Endothelial cell of umbilical vein (primary cell): ENCODE measurements at regions of chr3 and their contacts with region 1.

Region 1: GRCh38 chr3:161423911-161424522 is 52.7 kb upstream of the SPTSSB start:
- DNase-seq: peak; percentile 44
- H3K4me3 ChIP-seq: no peak overlapping the region
- H3K27ac ChIP-seq: no peak overlapping the region
- H3K4me1 ChIP-seq: peaks cover 5% of the 10 kb centered on the region
- H3K27me3 ChIP-seq: peaks cover 1 to 5% of the 10 kb centered on the region in 2 experiments
- CTCF ChIP-seq: peak in 1 of 2 donors; percentile 40
- POLR2A ChIP-seq: no peak

Region 2: DNA sequence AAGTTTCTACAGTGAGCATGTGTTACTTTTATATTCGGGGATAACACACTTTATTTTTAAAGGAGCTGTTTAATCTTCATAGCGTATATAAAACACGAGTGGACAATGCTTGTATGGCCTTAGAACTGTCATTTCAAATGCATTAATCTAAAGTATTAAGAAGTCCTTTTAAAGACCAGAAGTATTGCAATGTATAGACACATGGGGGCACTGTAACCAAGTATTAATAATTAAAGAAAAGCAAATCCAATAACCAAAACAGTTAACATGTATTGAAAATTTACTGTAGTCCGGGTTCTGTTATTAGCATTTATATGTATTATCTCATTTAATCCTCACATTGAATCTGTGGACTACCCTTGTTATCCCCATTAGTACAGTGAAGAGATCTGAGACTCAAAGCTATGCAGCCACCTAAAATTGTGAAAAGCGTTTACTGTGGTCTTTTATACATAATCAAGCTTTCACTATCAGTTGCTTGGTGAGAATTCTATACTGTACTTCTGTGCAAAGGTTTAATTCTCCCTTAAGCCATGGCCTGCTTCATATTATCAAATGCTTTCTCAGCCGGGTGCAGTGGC is 737.0 kb before region 1 on chr3:
- CTCF ChIA-PET with region 1: interaction called, 5 read pairs
- POLR2A ChIA-PET with region 1: no interaction called
- dilution Hi-C with region 1: no loop called
- intact Hi-C with region 1: loop called (anchors 5 kb)
- DNase-seq: peak; percentile 39
- H3K4me3 ChIP-seq: no peak overlapping the region
- H3K27ac ChIP-seq: no peak overlapping the region
- H3K4me1 ChIP-seq: no peaks in the 10 kb centered on the region
- H3K27me3 ChIP-seq: no peaks in the 10 kb centered on the region
- CTCF ChIP-seq: peak; percentile 16 to 18
- POLR2A ChIP-seq: no peak

Region 3: GRCh38 chr3:160707187-160707794 is 716.7 kb before region 1 on chr3:
- CTCF ChIA-PET with region 1: interaction called, 7 read pairs
- POLR2A ChIA-PET with region 1: no interaction called
- dilution Hi-C with region 1: no loop called
- intact Hi-C with region 1: loop called (anchors 1 kb)
- DNase-seq: peak; percentile 43
- H3K4me3 ChIP-seq: no peak overlapping the region
- H3K27ac ChIP-seq: no peak overlapping the region
- H3K4me1 ChIP-seq: no peaks in the 10 kb centered on the region
- H3K27me3 ChIP-seq: peaks cover 2 to 7% of the 10 kb centered on the region in 2 experiments
- CTCF ChIP-seq: peak; percentile 14 to 36
- POLR2A ChIP-seq: no peak

Region 4: DNA sequence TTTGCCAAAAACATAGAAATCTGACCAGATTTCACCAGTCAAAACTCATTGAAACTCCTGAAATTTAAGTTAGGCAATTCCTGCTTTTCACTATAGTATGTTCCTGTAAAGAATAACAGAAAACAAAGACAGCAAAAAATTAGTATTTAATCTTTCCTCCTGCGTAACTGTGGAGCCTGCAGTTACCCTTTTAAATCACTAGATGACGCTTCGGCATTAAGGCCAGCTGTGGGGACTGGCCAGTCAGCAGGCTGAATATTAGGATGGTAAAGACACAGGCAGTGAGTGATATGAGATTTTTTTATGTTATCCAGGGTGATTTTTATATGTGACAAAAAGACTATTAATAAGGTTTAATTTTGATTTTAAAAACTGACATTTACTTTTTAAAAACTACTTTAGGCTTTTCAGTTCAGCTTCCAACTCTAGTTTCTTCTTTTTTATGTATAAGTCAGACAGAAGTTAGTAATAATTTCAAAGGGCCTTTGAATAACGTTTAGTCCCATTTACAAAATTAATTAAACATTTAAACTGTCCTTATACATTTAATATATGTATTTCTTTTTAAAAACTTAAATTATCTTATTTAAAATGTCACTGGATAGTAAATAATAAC is 502.9 kb before region 1 on chr3:
- CTCF ChIA-PET with region 1: interaction called, 7 read pairs
- POLR2A ChIA-PET with region 1: no interaction called
- dilution Hi-C with region 1: no loop called
- intact Hi-C with region 1: loop called (anchors 1 kb)
- DNase-seq: peak; percentile 55
- H3K4me3 ChIP-seq: no peak overlapping the region
- H3K27ac ChIP-seq: no peak overlapping the region
- H3K4me1 ChIP-seq: no peaks in the 10 kb centered on the region
- H3K27me3 ChIP-seq: no peaks in the 10 kb centered on the region
- CTCF ChIP-seq: peak; percentile 75 to 77
- POLR2A ChIP-seq: no peak

Region 5: DNA sequence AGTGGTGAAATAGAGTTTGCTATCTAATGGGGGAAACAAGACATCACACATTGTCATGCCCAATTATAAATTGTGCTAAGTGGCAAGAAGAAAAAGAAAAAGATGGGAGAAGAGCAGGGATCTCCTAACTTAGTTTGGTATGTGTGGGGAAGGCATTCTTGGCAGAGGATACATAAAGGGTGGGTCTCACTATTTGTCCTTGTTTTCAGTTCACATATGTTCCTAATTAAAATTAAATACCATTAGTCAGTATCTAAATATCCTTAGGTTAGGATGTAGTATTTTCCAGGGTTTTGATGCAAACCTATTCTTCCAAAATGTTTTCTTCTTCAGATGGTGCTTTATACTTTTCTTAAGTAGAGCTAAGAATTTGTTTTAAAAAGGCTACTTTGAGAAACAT is 492.5 kb before region 1 on chr3:
- CTCF ChIA-PET with region 1: no interaction called
- POLR2A ChIA-PET with region 1: no interaction called
- dilution Hi-C with region 1: no loop called
- intact Hi-C with region 1: no loop called
- DNase-seq: no peak
- H3K4me3 ChIP-seq: no peak overlapping the region
- H3K27ac ChIP-seq: no peak overlapping the region
- H3K4me1 ChIP-seq: no peaks in the 10 kb centered on the region
- H3K27me3 ChIP-seq: no peaks in the 10 kb centered on the region
- CTCF ChIP-seq: no peak
- POLR2A ChIP-seq: no peak

Region 6: DNA sequence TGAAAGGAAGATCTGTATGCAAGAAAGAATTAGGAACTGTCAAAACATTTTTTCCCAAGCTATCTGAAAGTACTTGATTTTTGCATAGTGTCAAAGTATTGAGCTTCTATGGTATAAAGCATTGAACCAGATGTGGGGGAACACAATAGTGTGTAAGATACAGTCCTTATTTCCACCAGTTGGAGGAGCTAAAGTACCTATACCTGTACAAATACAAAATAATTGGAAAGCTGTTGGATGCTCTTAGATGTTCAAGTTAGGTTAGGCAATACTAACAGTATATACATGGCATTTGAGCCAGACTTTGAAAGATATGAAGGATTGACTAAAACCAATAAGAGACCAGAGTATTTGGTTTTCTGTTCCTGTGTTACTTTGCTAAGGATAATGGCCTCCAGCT is 467.2 kb before region 1 on chr3:
- CTCF ChIA-PET with region 1: interaction called, 8 read pairs
- POLR2A ChIA-PET with region 1: no interaction called
- dilution Hi-C with region 1: no loop called
- intact Hi-C with region 1: loop called (anchors 1 kb)
- DNase-seq: peak; percentile 50
- H3K4me3 ChIP-seq: no peak overlapping the region
- H3K27ac ChIP-seq: no peak overlapping the region
- H3K4me1 ChIP-seq: no peaks in the 10 kb centered on the region
- H3K27me3 ChIP-seq: no peaks in the 10 kb centered on the region
- CTCF ChIP-seq: peak; percentile 25 to 35
- POLR2A ChIP-seq: no peak

Region 7: GRCh38 chr3:161096771-161097355 is 327.2 kb before region 1 on chr3:
- CTCF ChIA-PET with region 1: interaction called, 3 read pairs
- POLR2A ChIA-PET with region 1: no interaction called
- dilution Hi-C with region 1: no loop called
- intact Hi-C with region 1: loop called (anchors 5 kb)
- DNase-seq: peak; percentile 21
- H3K4me3 ChIP-seq: no peak overlapping the region
- H3K27ac ChIP-seq: no peak overlapping the region
- H3K4me1 ChIP-seq: no peaks in the 10 kb centered on the region
- H3K27me3 ChIP-seq: no peaks in the 10 kb centered on the region
- CTCF ChIP-seq: peak; percentile 9 to 24
- POLR2A ChIP-seq: no peak

Region 8: GRCh38 chr3:161409069-161409468 is 14.9 kb before region 1 on chr3:
- CTCF ChIA-PET with region 1: interaction called, 10 read pairs
- POLR2A ChIA-PET with region 1: no interaction called
- dilution Hi-C with region 1: no loop called
- intact Hi-C with region 1: no loop called
- DNase-seq: peak; percentile 61
- H3K4me3 ChIP-seq: no peak overlapping the region
- H3K27ac ChIP-seq: no peak overlapping the region
- H3K4me1 ChIP-seq: no peaks in the 10 kb centered on the region
- H3K27me3 ChIP-seq: no peaks in the 10 kb centered on the region
- CTCF ChIP-seq: peak; percentile 48 to 51
- POLR2A ChIP-seq: no peak

Region 9: DNA sequence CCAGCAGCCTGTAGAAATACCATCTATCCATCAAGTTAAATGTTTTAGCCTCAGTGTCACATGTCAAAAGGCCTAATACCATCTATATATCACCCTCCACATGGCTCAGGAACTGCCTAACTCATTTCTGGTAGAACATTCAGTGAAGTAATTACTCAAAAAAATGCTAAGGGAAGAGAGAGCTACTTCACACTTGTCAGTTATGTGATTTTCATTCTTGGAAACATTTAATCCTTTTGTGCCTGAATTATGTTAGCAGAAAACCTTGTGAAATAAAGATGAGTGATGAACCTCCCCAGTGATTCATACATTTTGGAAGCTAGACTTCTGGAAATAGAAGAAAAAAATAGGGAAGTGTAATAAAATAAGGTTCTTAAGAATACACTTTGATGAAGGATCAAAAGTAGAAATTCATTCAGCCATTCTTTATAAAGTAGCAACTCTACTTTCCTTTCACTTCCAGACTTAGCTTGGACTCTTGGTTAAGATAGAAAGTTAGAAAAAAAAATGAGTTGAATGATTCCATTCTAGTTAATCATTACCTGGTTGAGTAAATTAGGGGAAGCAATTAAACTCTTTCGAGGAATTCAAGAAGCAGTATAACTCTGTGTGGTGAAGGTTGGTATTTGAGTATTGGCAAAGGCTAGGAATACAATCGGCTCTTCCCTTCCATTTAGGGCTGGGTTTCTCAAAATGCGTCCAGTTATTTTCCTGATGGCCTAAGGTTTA is 76.2 kb after region 1 on chr3:
- CTCF ChIA-PET with region 1: no interaction called
- POLR2A ChIA-PET with region 1: no interaction called
- dilution Hi-C with region 1: no loop called
- intact Hi-C with region 1: no loop called
- DNase-seq: no peak
- H3K4me3 ChIP-seq: no peak overlapping the region
- H3K27ac ChIP-seq: no peak overlapping the region
- H3K4me1 ChIP-seq: no peaks in the 10 kb centered on the region
- H3K27me3 ChIP-seq: no peaks in the 10 kb centered on the region
- CTCF ChIP-seq: no peak
- POLR2A ChIP-seq: no peak